CD8-positive, alpha-beta T cell (primary cell): ENCODE measurements at regions of chr16 and their contacts with region 1.

Region 1: GRCh38 chr16:22874394-22874793 is 60.4 kb downstream of the HS3ST2 start:
- DNase-seq: no peak
- ATAC-seq: no peak
- H3K4me3 ChIP-seq: no peak overlapping the region
- H3K4me3 Mint-ChIP-seq: no peak overlapping the region
- H3K27ac ChIP-seq: no peak overlapping the region
- H3K27ac Mint-ChIP-seq: no peak overlapping the region
- H3K4me1 ChIP-seq: no peaks in the 10 kb centered on the region
- H3K4me1 Mint-ChIP-seq: no peaks in the 10 kb centered on the region
- H3K27me3 ChIP-seq: no peaks in the 10 kb centered on the region
- H3K27me3 Mint-ChIP-seq: peaks cover 7% of the 10 kb centered on the region
- CTCF ChIP-seq: no peak

Region 2: GRCh38 chr16:22933173-22933572 is 58.8 kb after region 1 on chr16:
- CTCF ChIA-PET with region 1: no interaction called
- POLR2A ChIA-PET with region 1: no interaction called
- intact Hi-C with region 1: loop called in 1 of 2 experiments (anchors 10 kb)
- DNase-seq: no peak
- ATAC-seq: no peak
- H3K4me3 ChIP-seq: no peak overlapping the region
- H3K4me3 Mint-ChIP-seq: no peak overlapping the region
- H3K27ac ChIP-seq: no peak overlapping the region
- H3K27ac Mint-ChIP-seq: no peak overlapping the region
- H3K4me1 ChIP-seq: no peaks in the 10 kb centered on the region
- H3K4me1 Mint-ChIP-seq: no peaks in the 10 kb centered on the region
- H3K27me3 ChIP-seq: no peaks in the 10 kb centered on the region
- H3K27me3 Mint-ChIP-seq: peaks cover 26% of the 10 kb centered on the region
- CTCF ChIP-seq: no peak